Right lobe of liver (tissue), 6 donors: ENCODE measurements at regions of chr2 and their contacts with region 1.

Region 1: GRCh38 chr2:20755132-20755800 is 67.6 kb downstream of the LDAH start:
- DNase-seq: no peak
- ATAC-seq: peak in 3 of 4 donors; percentile 29 to 38 (median 38)
- H3K4me3 ChIP-seq: no peak overlapping the region
- H3K27ac ChIP-seq: no peak overlapping the region
- H3K4me1 ChIP-seq: peaks cover 0 to 7% (median 2%) of the 10 kb centered on the region in 4 donors
- H3K27me3 ChIP-seq: no peaks in the 10 kb centered on the region
- CTCF ChIP-seq: peak; percentile 23 to 26 (median 25)
- POLR2A ChIP-seq: no peak

Region 2: GRCh38 chr2:20682167-20682920 is 72.9 kb before region 1 on chr2:
- intact Hi-C with region 1: loop called in 1 of 2 experiments (anchors 10 kb)
- DNase-seq: no peak
- ATAC-seq: peak; percentile 65 to 70 (median 68)
- H3K4me3 ChIP-seq: no peak overlapping the region
- H3K27ac ChIP-seq: no peak overlapping the region
- H3K4me1 ChIP-seq: peaks cover 0 to 23% (median 7%) of the 10 kb centered on the region in 4 donors
- H3K27me3 ChIP-seq: no peaks in the 10 kb centered on the region
- CTCF ChIP-seq: peak; percentile 62 to 82 (median 70)
- POLR2A ChIP-seq: no peak

Region 3: DNA sequence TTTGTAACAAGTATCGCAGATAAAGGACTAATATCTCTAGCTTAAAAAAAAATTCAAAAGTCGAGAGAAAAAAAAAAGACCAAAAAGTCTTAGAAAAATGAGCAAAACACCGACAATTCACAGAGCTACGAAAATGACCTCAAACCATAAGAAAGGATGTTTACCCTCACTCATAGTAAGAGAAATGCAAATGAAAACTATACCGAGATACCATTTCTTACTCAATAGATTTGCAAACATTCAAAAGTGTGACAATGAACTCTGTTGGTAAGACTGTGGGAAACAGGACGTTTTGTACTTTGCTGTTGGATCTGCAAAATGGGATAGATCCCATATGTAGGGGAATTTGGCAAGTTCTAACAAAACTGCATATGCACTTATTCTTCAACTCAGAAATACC is 107.6 kb after region 1 on chr2:
- intact Hi-C with region 1: no loop called
- DNase-seq: no peak
- ATAC-seq: no peak
- H3K4me3 ChIP-seq: no peak overlapping the region
- H3K27ac ChIP-seq: no peak overlapping the region
- H3K4me1 ChIP-seq: no peaks in the 10 kb centered on the region
- H3K27me3 ChIP-seq: no peaks in the 10 kb centered on the region
- CTCF ChIP-seq: no peak
- POLR2A ChIP-seq: no peak

Region 4: DNA sequence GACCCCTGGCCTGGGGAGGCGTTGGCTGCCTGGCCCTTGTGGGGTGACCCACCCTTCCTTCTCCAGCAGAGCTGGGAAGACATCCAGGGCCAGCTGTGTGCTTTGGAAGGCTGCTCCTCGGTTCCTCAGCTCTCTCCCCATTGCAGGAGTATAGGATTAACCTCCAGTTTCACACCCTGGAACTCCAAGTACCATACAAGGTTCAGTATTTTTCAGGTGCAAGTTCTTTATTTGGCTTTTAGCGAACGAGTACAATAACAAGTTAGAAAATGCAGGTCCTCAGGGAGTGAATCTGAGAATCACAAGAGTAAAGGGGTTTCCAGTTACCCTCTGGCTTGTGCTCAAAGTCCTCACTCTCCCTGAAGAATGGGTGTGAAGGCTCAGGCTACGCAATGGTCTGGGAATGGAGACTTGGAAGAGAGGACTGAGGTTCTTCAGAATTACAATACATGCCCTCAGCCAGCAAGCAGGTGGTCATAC is 187.4 kb after region 1 on chr2:
- intact Hi-C with region 1: no loop called
- DNase-seq: no peak
- ATAC-seq: no peak
- H3K4me3 ChIP-seq: no peak overlapping the region
- H3K27ac ChIP-seq: no peak overlapping the region
- H3K4me1 ChIP-seq: no peaks in the 10 kb centered on the region
- H3K27me3 ChIP-seq: no peaks in the 10 kb centered on the region
- CTCF ChIP-seq: no peak
- POLR2A ChIP-seq: no peak